ENCODE measurements at regions of chr7 and their contacts with region 1.

Region 1: DNA sequence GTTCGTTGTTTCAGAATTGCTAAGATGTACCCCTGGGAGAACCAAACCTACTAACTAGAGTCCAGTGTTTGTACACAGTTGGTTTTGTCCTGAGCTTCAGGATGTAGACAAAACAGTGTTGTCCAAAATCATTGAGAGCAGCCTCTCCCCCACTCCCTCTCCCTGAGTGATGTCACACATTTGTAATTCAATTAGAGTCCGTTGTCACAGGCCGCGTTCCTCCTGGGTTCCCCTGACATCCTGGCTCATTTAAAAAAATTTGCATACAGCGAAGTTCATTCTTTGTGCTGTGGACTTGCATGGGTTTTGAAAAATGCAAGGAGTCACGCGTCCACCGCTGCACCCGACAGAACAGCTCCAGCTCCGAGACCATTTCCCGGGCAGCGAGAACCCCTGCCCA is 10.3 kb downstream of the GRIFIN start:
- DNase-seq: no peak
- ATAC-seq: no peak
- H3K4me3 ChIP-seq: no peak overlapping the region
- H3K27ac ChIP-seq: no peak overlapping the region
- H3K4me1 ChIP-seq: peaks cover 0 to 7% of the 10 kb centered on the region in 2 experiments; a peak in 2 of 4 replicates
- H3K27me3 ChIP-seq: no peaks in the 10 kb centered on the region
- CTCF ChIP-seq: no peak
- POLR2A ChIP-seq: no peak
- RAD21 ChIP-seq: no peak

Region 2: GRCh38 chr7:1579481-1580421 is 886.2 kb before region 1 on chr7:
- CTCF ChIA-PET with region 1: interaction called, 8 read pairs
- POLR2A ChIA-PET with region 1: no interaction called
- RAD21 ChIA-PET with region 1: interaction called in 1 of 2 experiments, 3 read pairs
- intact Hi-C with region 1: loop called (anchors 5 kb)
- DNase-seq: no peak
- ATAC-seq: peak; percentile 99
- H3K4me3 ChIP-seq: no peak overlapping the region
- H3K27ac ChIP-seq: no peak overlapping the region
- H3K4me1 ChIP-seq: peaks cover 0 to 8% of the 10 kb centered on the region in 2 experiments; a peak in 1 of 4 replicates
- H3K27me3 ChIP-seq: no peaks in the 10 kb centered on the region
- CTCF ChIP-seq: peak; percentile 81 to 86 (median 84)
- POLR2A ChIP-seq: no peak
- RAD21 ChIP-seq: peak; percentile 96

Region 3: GRCh38 chr7:2384354-2385243 is 81.3 kb before region 1 on chr7:
- CTCF ChIA-PET with region 1: interaction called, 10 read pairs
- POLR2A ChIA-PET with region 1: no interaction called
- RAD21 ChIA-PET with region 1: no interaction called
- intact Hi-C with region 1: no loop called
- DNase-seq: no peak
- ATAC-seq: peak; percentile 31; the same call in 1 of the 2 replicates
- H3K4me3 ChIP-seq: no peak overlapping the region
- H3K27ac ChIP-seq: no peak overlapping the region
- H3K4me1 ChIP-seq: peaks cover 3 to 6% of the 10 kb centered on the region in 2 experiments
- H3K27me3 ChIP-seq: no peaks in the 10 kb centered on the region
- CTCF ChIP-seq: 0 out of 6 replicates have a peak, but pooled peaks of 2 of the 3 experiments have one; percentile 13 to 17
- POLR2A ChIP-seq: no peak
- RAD21 ChIP-seq: peak; percentile 57

Region 4: GRCh38 chr7:2451171-2452073 is 14.5 kb before region 1 on chr7:
- CTCF ChIA-PET with region 1: interaction called, 63 read pairs
- POLR2A ChIA-PET with region 1: interaction called, 4 read pairs
- RAD21 ChIA-PET with region 1: interaction called, 10 to 12 read pairs
- intact Hi-C with region 1: loop called (anchors 1 kb)
- DNase-seq: peak; percentile 61
- ATAC-seq: peak; percentile 98
- H3K4me3 ChIP-seq: peak overlapping the region; percentile 23 to 48
- H3K27ac ChIP-seq: peak overlapping the region; percentile 39; the same call in 1 of the 2 replicates
- H3K4me1 ChIP-seq: peaks cover 10 to 15% of the 10 kb centered on the region in 2 experiments; a peak in 3 of 4 replicates
- H3K27me3 ChIP-seq: no peaks in the 10 kb centered on the region
- CTCF ChIP-seq: peak; percentile 87 to 93 (median 91)
- POLR2A ChIP-seq: no peak
- RAD21 ChIP-seq: peak; percentile 98

Region 5: GRCh38 chr7:2478800-2479199 is 12.9 kb after region 1 on chr7:
- CTCF ChIA-PET with region 1: interaction called, 10 read pairs
- POLR2A ChIA-PET with region 1: interaction called, 4 read pairs
- RAD21 ChIA-PET with region 1: no interaction called
- intact Hi-C with region 1: no loop called
- DNase-seq: no peak
- ATAC-seq: no peak
- H3K4me3 ChIP-seq: no peak overlapping the region
- H3K27ac ChIP-seq: no peak overlapping the region
- H3K4me1 ChIP-seq: peaks cover 7 to 11% of the 10 kb centered on the region in 2 experiments; a peak in 2 of 4 replicates
- H3K27me3 ChIP-seq: no peaks in the 10 kb centered on the region
- CTCF ChIP-seq: no peak
- POLR2A ChIP-seq: no peak
- RAD21 ChIP-seq: no peak

Region 6: GRCh38 chr7:2555121-2556052 is 89.5 kb after region 1 on chr7 and contains the start of gene BRAT1:
- CTCF ChIA-PET with region 1: interaction called, 4 read pairs
- POLR2A ChIA-PET with region 1: no interaction called
- RAD21 ChIA-PET with region 1: no interaction called
- intact Hi-C with region 1: loop called (anchors 5 kb)
- DNase-seq: peak; percentile 89
- ATAC-seq: peak; percentile 79
- H3K4me3 ChIP-seq: peak within 1 kb of the TSS; percentile 57 to 88
- H3K27ac ChIP-seq: peak within 1 kb of the TSS; percentile 100
- H3K4me1 ChIP-seq: peaks cover 22 to 45% of the 10 kb centered on the region in 2 experiments
- H3K27me3 ChIP-seq: no peaks in the 10 kb centered on the region
- CTCF ChIP-seq: peak in 2 of 3 experiments; percentile 45 to 55; a peak in 4 of 6 replicates
- POLR2A ChIP-seq: peak; percentile 56
- RAD21 ChIP-seq: no peak
- total RNA-seq, gene BRAT1: 47.6 TPM

Measured in HCT116 (cell line).